PC-3 (cell line): ENCODE measurements at regions of chr13 and their contacts with region 1.

Region 1: DNA sequence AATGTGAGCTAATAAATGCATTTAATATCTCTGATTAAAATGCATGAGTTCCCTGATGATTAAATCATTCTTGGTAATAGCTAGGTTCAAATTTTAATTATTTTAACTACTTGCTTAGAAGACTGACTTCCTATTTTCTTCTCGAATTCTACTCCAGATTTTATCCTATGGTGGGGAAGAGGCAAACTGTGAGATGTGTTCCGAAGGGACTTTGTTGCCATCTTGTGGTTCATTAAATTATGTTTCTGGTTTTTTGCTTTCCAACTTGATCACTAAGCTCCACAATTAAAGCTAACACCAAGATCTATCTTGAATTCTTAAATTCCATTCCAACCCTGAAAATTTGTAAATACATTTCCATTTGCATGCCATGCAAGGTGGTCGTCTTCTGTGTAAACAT is 538.4 kb upstream of the PCDH20 start:
- DNase-seq: peak; percentile 50
- ATAC-seq: no peak
- H3K4me3 ChIP-seq: no peak overlapping the region
- H3K27ac ChIP-seq: no peak overlapping the region
- H3K4me1 ChIP-seq: no peaks in the 10 kb centered on the region
- H3K27me3 ChIP-seq: no peaks in the 10 kb centered on the region
- CTCF ChIP-seq: peak; percentile 57; the same call in 1 of the 2 replicates

Region 2: GRCh38 chr13:60448907-60449510 is 1505.1 kb before region 1 on chr13:
- CTCF ChIA-PET with region 1: no interaction called
- POLR2A ChIA-PET with region 1: no interaction called
- intact Hi-C with region 1: loop called (anchors 10 kb)
- DNase-seq: peak; percentile 52
- ATAC-seq: peak; percentile 48
- H3K4me3 ChIP-seq: no peak overlapping the region
- H3K27ac ChIP-seq: no peak overlapping the region
- H3K4me1 ChIP-seq: no peaks in the 10 kb centered on the region
- H3K27me3 ChIP-seq: no peaks in the 10 kb centered on the region
- CTCF ChIP-seq: peak; percentile 64

Region 3: DNA sequence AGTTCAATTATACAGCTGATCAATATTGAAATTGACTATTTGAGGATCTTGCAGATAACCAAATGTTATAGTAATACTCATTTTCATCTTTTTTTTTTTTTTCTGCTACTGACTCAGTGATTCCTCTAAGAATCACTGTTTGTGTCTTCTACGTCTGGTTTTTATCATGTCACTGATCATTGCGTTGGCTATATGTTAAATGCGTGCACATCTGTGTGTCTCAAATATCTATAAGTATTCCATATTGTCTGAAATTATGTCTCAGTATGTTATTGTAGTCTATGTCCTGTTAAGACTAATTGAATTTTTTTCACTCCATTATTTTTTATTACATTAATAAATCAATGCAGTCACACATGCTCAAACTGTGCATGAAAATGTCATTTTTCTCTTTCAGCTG is 739.0 kb before region 1 on chr13:
- CTCF ChIA-PET with region 1: no interaction called
- POLR2A ChIA-PET with region 1: no interaction called
- intact Hi-C with region 1: no loop called
- DNase-seq: no peak
- ATAC-seq: no peak
- H3K4me3 ChIP-seq: no peak overlapping the region
- H3K27ac ChIP-seq: no peak overlapping the region
- H3K4me1 ChIP-seq: no peaks in the 10 kb centered on the region
- H3K27me3 ChIP-seq: no peaks in the 10 kb centered on the region
- CTCF ChIP-seq: no peak

Region 4: DNA sequence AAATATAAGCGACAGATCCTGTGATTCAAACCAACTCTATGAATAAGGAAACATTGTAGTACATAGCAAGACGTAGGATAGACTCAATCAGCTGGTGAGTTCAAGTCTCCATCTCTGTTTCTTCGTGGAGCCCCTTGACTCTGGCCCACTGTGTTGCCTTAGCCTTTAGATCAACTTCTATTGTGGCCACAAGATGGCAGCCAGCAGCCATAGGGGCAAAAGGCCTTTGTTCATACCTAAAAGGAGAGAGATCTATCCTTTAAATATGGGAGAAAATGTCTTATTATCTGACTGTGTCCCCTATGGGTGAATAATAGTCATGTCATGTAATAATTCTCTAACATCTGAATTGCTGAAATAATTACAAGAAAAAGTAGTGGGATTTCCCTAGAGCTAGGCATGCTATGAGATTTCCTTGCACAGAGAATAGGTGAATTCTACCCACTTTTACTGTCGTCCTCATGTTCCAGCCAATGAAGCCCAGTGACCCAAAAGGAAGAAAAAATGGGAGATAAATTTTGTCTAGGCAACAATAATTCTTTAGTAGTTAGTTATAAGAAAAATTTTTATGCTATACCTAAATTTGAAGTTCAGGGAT is 667.8 kb before region 1 on chr13:
- CTCF ChIA-PET with region 1: no interaction called
- POLR2A ChIA-PET with region 1: no interaction called
- intact Hi-C with region 1: loop called (anchors 5 kb)
- DNase-seq: peak; percentile 42
- ATAC-seq: peak; percentile 71; the same call in 1 of the 2 replicates
- H3K4me3 ChIP-seq: no peak overlapping the region
- H3K27ac ChIP-seq: no peak overlapping the region
- H3K4me1 ChIP-seq: no peaks in the 10 kb centered on the region
- H3K27me3 ChIP-seq: no peaks in the 10 kb centered on the region
- CTCF ChIP-seq: peak; percentile 61

Region 5: GRCh38 chr13:61685682-61686012 is 268.4 kb before region 1 on chr13:
- CTCF ChIA-PET with region 1: no interaction called
- POLR2A ChIA-PET with region 1: no interaction called
- intact Hi-C with region 1: loop called (anchors 10 kb)
- DNase-seq: no peak
- ATAC-seq: peak; percentile 65
- H3K4me3 ChIP-seq: no peak overlapping the region
- H3K27ac ChIP-seq: no peak overlapping the region
- H3K4me1 ChIP-seq: no peaks in the 10 kb centered on the region
- H3K27me3 ChIP-seq: no peaks in the 10 kb centered on the region
- CTCF ChIP-seq: 0 out of 2 replicates have a peak, but pooled peaks have one; percentile 18

Region 6: DNA sequence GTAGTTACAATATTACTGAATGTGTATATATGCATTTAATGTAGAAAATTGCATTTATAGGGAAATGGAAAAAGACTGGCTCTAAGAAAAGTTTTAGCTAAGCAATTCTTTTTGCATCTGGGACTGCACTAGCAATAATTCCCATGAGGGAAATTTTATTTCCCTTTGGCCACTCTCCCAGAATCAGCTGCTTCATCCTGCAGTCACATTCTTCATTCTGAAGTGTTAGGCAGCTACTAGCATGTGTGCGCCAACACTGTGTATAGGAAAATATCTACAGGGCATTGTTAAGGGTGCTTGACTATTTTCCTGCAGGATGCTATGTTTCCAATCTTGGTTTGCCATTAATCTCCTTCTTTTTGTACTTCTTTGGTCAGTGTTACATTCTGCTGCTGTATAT is 225.6 kb before region 1 on chr13:
- CTCF ChIA-PET with region 1: no interaction called
- POLR2A ChIA-PET with region 1: no interaction called
- intact Hi-C with region 1: no loop called
- DNase-seq: no peak
- ATAC-seq: peak; percentile 71
- H3K4me3 ChIP-seq: no peak overlapping the region
- H3K27ac ChIP-seq: no peak overlapping the region
- H3K4me1 ChIP-seq: no peaks in the 10 kb centered on the region
- H3K27me3 ChIP-seq: no peaks in the 10 kb centered on the region
- CTCF ChIP-seq: no peak

Region 7: GRCh38 chr13:61880578-61881283 is 73.4 kb before region 1 on chr13:
- CTCF ChIA-PET with region 1: interaction called, 4 read pairs
- POLR2A ChIA-PET with region 1: no interaction called
- intact Hi-C with region 1: loop called (anchors 1 kb)
- DNase-seq: peak; percentile 33
- ATAC-seq: peak; percentile 66
- H3K4me3 ChIP-seq: no peak overlapping the region
- H3K27ac ChIP-seq: no peak overlapping the region
- H3K4me1 ChIP-seq: no peaks in the 10 kb centered on the region
- H3K27me3 ChIP-seq: no peaks in the 10 kb centered on the region
- CTCF ChIP-seq: peak; percentile 51

Region 8: GRCh38 chr13:62093984-62094780 is 140.1 kb after region 1 on chr13:
- CTCF ChIA-PET with region 1: no interaction called
- POLR2A ChIA-PET with region 1: no interaction called
- intact Hi-C with region 1: no loop called
- DNase-seq: no peak
- ATAC-seq: no peak
- H3K4me3 ChIP-seq: no peak overlapping the region
- H3K27ac ChIP-seq: no peak overlapping the region
- H3K4me1 ChIP-seq: no peaks in the 10 kb centered on the region
- H3K27me3 ChIP-seq: no peaks in the 10 kb centered on the region
- CTCF ChIP-seq: no peak